ENCODE measurements at regions of chr4 and their contacts with region 1.

Region 1: DNA sequence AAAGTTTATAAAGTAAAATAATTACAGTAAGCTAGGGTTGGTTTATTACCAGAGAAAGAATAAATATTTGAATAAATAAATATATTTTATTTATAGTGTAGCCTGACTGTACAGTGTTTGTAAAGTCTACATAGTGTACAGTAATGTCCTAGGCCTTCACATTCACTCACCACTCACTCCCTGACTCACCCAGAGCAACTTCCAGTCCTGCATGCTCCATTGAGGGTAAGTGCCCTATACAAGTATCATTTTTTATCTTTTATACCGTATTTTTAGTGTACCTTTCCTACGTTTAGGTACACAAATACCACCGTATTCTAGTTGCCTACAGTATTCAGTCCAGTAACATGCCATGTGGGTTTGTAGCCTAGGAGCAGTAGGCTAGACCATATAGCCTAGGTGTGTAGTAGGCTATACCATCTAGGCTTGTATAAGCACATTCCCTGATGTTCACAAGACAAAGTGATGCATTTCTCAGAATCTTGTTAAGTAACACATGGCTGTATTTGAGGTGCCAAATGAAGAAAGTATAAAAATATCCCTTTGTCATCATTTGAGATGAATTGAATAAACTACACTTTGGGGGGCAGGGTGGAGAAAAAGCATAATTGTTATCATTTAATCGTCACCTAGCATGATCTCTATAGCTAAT is 14.7 kb upstream of the KLHL8 start:
- DNase-seq: peak; percentile 32
- H3K4me3 ChIP-seq: peak overlapping the region in 2 of 3 experiments; percentile 55 to 58
- H3K27ac ChIP-seq: peak overlapping the region; percentile 37
- H3K4me1 ChIP-seq: peaks cover 6% of the 10 kb centered on the region
- H3K27me3 ChIP-seq: no peaks in the 10 kb centered on the region
- CTCF ChIP-seq: no peak

Region 2: GRCh38 chr4:86497980-86498862 is 736.9 kb before region 1 on chr4:
- CTCF ChIA-PET with region 1: no interaction called
- dilution Hi-C with region 1: no loop called
- in situ Hi-C with region 1: loop called in 1 of 2 experiments (anchors 10 kb)
- intact Hi-C with region 1: loop called (anchors 1 kb)
- DNase-seq: peak; percentile 40
- H3K4me3 ChIP-seq: no peak overlapping the region
- H3K27ac ChIP-seq: no peak overlapping the region
- H3K4me1 ChIP-seq: peaks cover 26% of the 10 kb centered on the region
- H3K27me3 ChIP-seq: no peaks in the 10 kb centered on the region
- CTCF ChIP-seq: peak; percentile 78 to 89

Region 3: DNA sequence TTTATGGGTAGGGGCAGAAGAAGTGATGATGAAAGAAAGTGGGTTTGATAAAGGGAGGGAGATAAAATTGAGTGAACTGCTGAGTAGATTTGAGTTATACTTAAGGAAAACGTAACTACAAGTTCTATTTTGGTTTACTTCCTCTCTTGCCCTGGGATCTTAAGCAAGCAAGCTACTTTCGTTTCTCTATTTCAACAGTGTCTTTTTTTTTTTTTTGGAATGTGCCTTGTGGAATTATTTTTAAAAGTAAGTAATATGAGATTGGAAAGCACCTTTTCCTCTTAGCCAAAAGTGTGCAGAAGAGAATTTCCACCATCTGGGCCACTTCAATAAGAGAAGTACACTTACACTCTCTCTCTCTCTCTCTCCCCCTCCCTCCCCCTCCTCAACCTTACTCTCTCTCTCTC is 326.9 kb before region 1 on chr4:
- CTCF ChIA-PET with region 1: no interaction called
- dilution Hi-C with region 1: no loop called
- in situ Hi-C with region 1: loop called (anchors 10 to 25 kb)
- intact Hi-C with region 1: no loop called
- DNase-seq: no peak
- H3K4me3 ChIP-seq: no peak overlapping the region
- H3K27ac ChIP-seq: no peak overlapping the region
- H3K4me1 ChIP-seq: peaks cover 4% of the 10 kb centered on the region
- H3K27me3 ChIP-seq: no peaks in the 10 kb centered on the region
- CTCF ChIP-seq: no peak

Region 4: DNA sequence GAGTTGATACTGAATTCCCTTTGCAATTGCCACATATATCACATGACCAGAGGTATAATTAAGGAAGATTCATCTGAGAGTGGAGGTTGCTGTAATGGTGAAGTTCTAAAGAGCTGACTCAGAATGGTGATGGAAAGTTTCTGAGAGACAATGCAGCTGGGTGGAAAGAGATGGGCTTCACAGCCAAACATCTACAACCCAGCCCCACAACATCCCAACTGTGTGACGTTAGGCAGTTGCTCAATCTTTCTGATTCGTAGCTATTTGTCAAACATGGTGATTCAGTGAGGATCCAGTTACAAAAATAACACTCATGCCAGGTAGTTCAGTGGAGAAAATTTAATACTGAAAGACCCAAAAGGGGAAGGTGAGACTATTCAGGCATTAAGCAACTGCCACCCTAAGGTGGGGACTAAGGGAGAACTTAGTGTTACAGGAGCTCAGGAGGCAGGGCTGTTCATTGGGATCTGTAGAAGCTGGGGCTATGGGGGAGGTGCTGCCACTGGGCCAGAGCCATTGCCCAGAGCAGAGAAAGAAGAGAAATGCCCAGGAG is 307.2 kb before region 1 on chr4:
- CTCF ChIA-PET with region 1: no interaction called
- dilution Hi-C with region 1: no loop called
- in situ Hi-C with region 1: loop called in 1 of 2 experiments (anchors 25 kb)
- intact Hi-C with region 1: loop called (anchors 5 kb)
- DNase-seq: peak; percentile 99
- H3K4me3 ChIP-seq: no peak overlapping the region
- H3K27ac ChIP-seq: peak overlapping the region; percentile 97
- H3K4me1 ChIP-seq: peaks cover 43% of the 10 kb centered on the region
- H3K27me3 ChIP-seq: no peaks in the 10 kb centered on the region
- CTCF ChIP-seq: no peak

Region 5: DNA sequence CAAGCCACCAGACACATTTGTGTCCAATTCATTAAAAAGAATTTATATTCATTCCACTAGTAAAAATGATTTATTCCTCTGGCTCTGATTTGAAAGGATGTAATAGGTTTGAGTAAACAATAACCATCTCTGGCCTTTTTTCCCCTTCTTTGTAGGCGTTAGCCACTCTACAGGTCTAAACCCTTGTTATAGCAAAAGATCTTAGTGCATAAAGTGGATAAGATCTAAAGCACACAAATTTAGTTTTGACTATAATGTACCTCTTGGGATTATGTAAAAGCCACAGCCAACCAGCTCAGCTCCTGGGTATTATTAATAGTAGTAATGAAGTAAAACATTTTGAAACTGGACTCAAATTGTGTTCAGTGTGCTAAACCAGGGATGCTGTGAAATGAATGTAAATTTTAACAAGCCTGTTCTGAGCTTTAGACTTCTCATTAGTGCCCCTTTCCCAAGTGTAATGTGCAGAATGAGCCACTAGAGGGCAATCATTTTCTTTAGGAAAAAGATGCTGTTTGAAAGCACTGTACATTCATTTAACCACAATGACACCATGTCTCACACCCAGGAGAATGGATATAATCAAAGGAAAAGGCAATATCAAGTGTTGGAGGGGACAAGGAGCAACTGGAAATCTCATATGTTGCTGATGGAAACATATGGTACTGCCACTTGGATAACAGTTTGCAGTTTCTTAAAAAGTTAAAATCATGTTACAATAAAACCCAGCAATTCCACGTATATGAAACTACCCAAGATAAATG is 84.5 kb before region 1 on chr4:
- CTCF ChIA-PET with region 1: no interaction called
- dilution Hi-C with region 1: no loop called
- in situ Hi-C with region 1: loop called in 1 of 2 experiments (anchors 5 kb)
- intact Hi-C with region 1: loop called (anchors 1 kb)
- DNase-seq: peak; percentile 64
- H3K4me3 ChIP-seq: no peak overlapping the region
- H3K27ac ChIP-seq: no peak overlapping the region
- H3K4me1 ChIP-seq: no peaks in the 10 kb centered on the region
- H3K27me3 ChIP-seq: no peaks in the 10 kb centered on the region
- CTCF ChIP-seq: peak; percentile 82 to 99

Region 6: DNA sequence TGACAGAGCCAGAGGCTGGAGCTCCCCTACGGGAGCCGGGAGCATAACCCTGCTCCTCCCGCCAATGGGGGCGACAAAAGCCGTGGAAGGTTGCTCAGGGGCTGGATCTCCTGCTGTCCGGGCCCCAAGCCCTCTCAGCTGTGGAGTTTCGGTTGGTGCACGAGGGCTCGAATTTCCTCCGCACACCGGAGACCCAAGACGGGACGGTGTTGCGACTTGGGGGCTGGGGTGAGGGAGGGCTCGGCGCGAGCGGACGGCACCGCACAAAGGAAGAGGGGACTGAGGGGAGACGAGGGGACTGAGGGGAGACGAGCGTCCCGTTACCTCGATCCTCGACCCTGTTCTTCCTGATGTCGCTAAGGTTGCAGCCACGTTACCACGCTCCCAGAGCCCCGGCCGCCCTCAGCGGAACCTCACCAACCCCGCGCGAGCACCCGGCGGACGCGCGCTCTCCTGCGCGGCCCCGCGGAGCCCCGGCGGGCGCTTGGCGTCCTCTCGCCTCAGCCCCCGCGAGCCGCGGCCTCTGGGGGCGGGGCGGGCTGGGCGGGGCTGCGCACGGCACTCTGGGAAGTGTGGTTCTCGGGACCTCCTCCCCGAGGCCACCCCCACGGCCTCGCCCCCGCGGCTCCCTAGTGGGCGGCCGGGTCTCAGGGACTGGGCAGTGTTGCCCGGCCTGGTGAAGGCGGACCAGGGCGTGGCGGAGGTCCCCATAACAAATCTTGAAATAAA is 14.9 kb before region 1 on chr4 and contains the start of gene KLHL8:
- CTCF ChIA-PET with region 1: no interaction called
- dilution Hi-C with region 1: no loop called
- in situ Hi-C with region 1: no loop called
- intact Hi-C with region 1: loop called (anchors 2 kb)
- DNase-seq: peak; percentile 87
- H3K4me3 ChIP-seq: peak within 1 kb of the TSS; percentile 54 to 100 (median 98)
- H3K27ac ChIP-seq: peak within 1 kb of the TSS; percentile 66
- H3K4me1 ChIP-seq: peaks cover 5% of the 10 kb centered on the region
- H3K27me3 ChIP-seq: no peaks in the 10 kb centered on the region
- CTCF ChIP-seq: peak in 1 of 2 donors; percentile 11
- total RNA-seq, gene KLHL8: 6.5 to 10.8 TPM

Region 7: GRCh38 chr4:87249332-87250019 is 14.3 kb after region 1 on chr4:
- CTCF ChIA-PET with region 1: no interaction called
- dilution Hi-C with region 1: no loop called
- in situ Hi-C with region 1: no loop called
- intact Hi-C with region 1: no loop called
- DNase-seq: no peak
- H3K4me3 ChIP-seq: no peak overlapping the region
- H3K27ac ChIP-seq: no peak overlapping the region
- H3K4me1 ChIP-seq: no peaks in the 10 kb centered on the region
- H3K27me3 ChIP-seq: peaks cover under 1% of the 10 kb centered on the region
- CTCF ChIP-seq: no peak

Region 8: DNA sequence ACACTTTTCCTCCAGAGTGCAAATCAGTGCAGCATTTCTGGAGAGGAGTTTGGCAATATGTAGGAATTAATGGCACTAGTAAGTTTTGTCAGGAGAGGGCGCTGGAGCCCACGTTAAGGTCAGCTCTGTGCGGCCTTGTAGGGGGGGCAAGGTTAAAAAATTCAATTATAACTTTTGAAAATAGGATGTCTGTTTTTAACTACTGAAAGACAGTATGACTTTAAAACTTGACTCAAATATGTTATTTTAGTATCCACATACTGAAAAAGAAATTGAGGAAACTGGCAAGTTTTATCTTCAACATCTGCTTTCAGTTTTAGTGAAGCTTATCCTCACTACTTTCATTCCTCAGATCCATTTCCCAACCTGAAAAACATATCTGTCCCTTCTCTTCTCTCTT is 118.4 kb after region 1 on chr4:
- CTCF ChIA-PET with region 1: no interaction called
- dilution Hi-C with region 1: no loop called
- in situ Hi-C with region 1: no loop called
- intact Hi-C with region 1: no loop called
- DNase-seq: peak; percentile 29
- H3K4me3 ChIP-seq: no peak overlapping the region
- H3K27ac ChIP-seq: no peak overlapping the region
- H3K4me1 ChIP-seq: peaks cover 7% of the 10 kb centered on the region
- H3K27me3 ChIP-seq: no peaks in the 10 kb centered on the region
- CTCF ChIP-seq: peak; percentile 56 to 76